HEK293 (cell line): ENCODE measurements at regions of chr14 and their contacts with region 1.

Region 1: GRCh38 chr14:64891839-64892375 is 12.2 kb upstream of the SPTB start:
- H3K4me3 ChIP-seq: no peak overlapping the region
- H3K27ac ChIP-seq: no peak overlapping the region
- H3K4me1 ChIP-seq: no peaks in the 10 kb centered on the region
- CTCF ChIP-seq: peak; percentile 44; the same call in 1 of the 2 replicates

Region 2: DNA sequence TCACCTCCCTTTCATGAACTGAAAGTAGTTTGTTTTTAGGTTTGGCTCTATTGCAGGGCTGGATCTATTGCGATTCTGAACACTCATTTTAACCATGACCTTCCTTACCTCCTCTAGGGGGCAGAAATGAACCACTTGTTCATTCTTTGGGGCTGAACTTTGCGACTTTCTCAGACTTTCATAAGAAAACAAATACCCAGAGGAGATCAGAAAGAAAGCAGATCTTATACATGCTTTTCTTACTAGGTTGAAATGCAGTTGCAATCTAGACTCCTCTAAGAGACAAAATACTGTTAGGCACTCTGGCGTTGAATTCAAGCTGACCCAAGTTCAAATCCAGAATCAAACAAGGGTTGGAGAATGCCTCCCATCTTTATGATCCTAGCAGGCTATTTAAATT is 220.3 kb before region 1 on chr14:
- CTCF ChIA-PET with region 1: interaction called, 56 read pairs
- POLR2A ChIA-PET with region 1: interaction called, 3 read pairs
- H3K4me3 ChIP-seq: no peak overlapping the region
- H3K27ac ChIP-seq: no peak overlapping the region
- H3K4me1 ChIP-seq: 0 out of 2 replicates have a peak, but pooled peaks cover 3% of the 10 kb centered on the region
- CTCF ChIP-seq: 0 out of 2 replicates have a peak, but pooled peaks have one; percentile 9

Region 3: DNA sequence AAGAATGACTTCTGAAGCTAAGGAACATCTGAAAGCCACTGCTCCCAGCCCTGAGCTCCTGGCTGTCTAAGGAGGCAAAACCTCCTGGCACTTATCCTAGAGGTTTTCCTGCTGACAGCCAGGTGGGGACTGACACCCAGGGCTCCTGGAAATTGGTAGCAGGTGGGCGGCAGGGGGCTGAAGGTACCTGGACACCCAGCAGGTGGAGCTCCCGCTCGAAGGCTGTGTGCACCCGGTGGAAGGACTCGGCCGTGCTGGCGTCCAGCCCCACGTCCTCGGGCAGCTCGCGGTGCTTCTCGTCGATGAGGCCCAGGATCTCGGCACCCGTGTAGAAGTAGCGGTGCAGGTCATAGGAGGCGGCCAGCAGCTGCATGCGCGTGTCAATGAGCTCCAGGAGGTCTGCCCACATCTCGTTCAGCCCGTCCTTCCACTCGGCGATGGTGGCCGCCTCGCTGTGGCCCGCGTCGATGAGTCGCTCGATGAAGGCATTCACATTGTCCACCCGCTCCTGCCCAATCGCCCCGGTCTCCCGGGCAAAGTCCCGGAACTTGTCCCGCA is 119.4 kb before region 1 on chr14:
- CTCF ChIA-PET with region 1: interaction called, 16 read pairs
- POLR2A ChIA-PET with region 1: no interaction called
- H3K4me3 ChIP-seq: no peak overlapping the region
- H3K27ac ChIP-seq: no peak overlapping the region
- H3K4me1 ChIP-seq: no peaks in the 10 kb centered on the region
- CTCF ChIP-seq: no peak

Region 4: DNA sequence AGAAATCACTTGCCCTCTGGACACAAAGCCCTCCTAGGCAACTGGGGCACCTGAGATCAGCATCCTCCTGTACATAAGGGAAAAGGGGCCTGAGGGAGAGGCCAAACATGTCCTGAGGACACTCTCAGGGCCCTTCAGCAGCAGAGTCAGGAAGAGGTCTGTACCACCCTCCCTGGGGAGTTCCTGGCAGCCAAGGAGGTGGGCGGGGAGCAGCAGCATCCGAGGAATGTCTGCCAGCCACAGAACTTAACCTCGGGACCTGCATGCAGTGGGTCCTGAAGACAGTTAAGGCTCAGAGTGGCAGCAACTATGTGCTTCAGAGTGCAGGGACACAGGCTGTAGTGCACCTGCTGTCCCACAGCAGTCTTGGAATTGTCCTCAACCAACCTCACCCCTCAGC is 74.3 kb before region 1 on chr14:
- CTCF ChIA-PET with region 1: interaction called, 199 read pairs
- POLR2A ChIA-PET with region 1: no interaction called
- H3K4me3 ChIP-seq: no peak overlapping the region
- H3K27ac ChIP-seq: no peak overlapping the region
- H3K4me1 ChIP-seq: peaks cover 2% of the 10 kb centered on the region; the same call in 1 of the 2 replicates
- CTCF ChIP-seq: no peak

Region 5: DNA sequence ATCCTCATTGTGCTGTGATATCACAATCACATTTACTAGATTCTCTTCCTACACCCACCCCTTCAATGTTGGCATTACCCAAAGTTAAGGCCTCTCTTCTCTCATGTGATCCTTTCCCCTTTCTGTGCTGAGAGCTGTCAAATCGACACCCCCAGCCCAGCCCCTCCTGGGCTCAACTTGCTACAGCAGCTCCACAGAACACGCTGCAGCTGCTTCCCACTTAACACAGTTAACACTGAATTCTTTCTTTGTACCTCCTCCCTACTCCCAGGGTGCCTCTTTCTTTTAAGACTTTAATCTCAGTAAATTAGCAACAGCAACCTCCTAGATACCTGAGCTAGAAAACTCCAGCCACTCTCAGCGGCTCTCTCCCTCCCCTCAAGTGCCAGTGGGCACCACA is 30.0 kb before region 1 on chr14:
- CTCF ChIA-PET with region 1: no interaction called
- POLR2A ChIA-PET with region 1: no interaction called
- H3K4me3 ChIP-seq: no peak overlapping the region
- H3K27ac ChIP-seq: no peak overlapping the region
- H3K4me1 ChIP-seq: no peaks in the 10 kb centered on the region
- CTCF ChIP-seq: no peak

Region 6: GRCh38 chr14:64880221-64881121 is 11.4 kb before region 1 on chr14:
- CTCF ChIA-PET with region 1: interaction called, 89 read pairs
- POLR2A ChIA-PET with region 1: interaction called, 3 read pairs
- H3K4me3 ChIP-seq: peak overlapping the region; percentile 64
- H3K27ac ChIP-seq: peak overlapping the region; percentile 18; the same call in 1 of the 2 replicates
- H3K4me1 ChIP-seq: no peaks in the 10 kb centered on the region
- CTCF ChIP-seq: peak; percentile 44; the same call in 1 of the 2 replicates

Region 7: GRCh38 chr14:65102441-65103149 is 210.7 kb after region 1 on chr14 and contains the start of gene MAX:
- CTCF ChIA-PET with region 1: no interaction called
- POLR2A ChIA-PET with region 1: no interaction called
- H3K4me3 ChIP-seq: peak within 1 kb of the TSS; percentile 93
- H3K27ac ChIP-seq: peak within 1 kb of the TSS; percentile 68
- H3K4me1 ChIP-seq: peaks cover 2% of the 10 kb centered on the region
- CTCF ChIP-seq: no peak